PC-3 (cell line): ENCODE measurements at regions of chr3 and their contacts with region 1.

Region 1: DNA sequence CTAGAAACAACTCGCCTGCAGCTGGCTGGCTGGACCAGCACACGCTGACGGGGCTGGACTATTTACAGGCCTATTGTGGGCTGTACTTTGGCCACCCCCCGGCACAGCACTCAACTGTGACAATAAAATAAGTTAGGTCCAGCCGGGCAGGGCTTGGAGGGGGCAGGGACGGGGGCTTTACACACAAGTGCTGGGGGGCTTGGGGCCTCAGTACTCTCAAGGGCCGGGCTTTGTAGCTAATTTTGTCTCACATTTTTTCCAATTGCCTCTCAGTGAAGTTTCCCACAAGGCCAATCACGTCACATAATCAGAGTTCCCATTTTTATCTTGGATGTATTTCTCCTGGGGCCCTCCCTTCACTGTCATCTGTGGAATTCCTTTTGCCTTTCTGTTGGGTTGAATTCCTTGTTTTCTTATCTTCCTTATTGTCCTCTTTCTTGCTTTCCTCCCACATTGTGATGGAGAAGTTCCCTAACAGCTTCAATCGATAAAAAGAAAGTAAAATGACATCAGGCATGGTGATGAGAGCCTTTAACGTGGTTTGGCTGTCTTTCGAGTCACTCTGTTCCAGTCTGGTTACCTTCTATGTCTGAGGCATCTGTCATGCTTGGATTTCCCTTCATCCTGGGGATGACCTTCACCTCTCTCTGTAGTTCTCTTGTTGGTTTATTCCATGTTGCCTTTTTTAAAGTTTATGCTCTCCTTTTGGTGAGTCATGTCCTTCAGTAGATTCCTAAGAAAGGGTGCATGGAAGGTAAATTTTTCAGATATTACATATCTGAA is 44.1 kb upstream of the CMTM7 start:
- DNase-seq: no peak
- ATAC-seq: no peak
- H3K4me3 ChIP-seq: no peak overlapping the region
- H3K27ac ChIP-seq: no peak overlapping the region
- H3K4me1 ChIP-seq: no peaks in the 10 kb centered on the region
- H3K27me3 ChIP-seq: no peaks in the 10 kb centered on the region
- CTCF ChIP-seq: no peak

Region 2: DNA sequence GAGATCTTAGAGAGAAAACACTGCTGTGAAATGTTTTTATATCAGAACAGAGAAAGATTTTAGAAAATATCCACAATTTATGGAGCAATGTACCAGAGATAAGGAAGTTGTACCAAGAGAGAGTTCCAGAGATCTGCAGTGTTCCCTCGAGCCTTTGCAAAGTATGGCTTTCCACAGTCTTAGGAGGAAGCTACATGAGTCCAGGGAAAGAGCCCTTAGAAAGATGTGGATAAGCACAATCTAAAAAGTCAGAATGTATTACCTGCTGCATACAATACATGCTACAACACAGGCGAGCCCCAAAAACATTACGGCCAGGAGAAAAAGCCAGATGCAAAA is 309.6 kb before region 1 on chr3:
- CTCF ChIA-PET with region 1: no interaction called
- POLR2A ChIA-PET with region 1: interaction called, 10 read pairs
- intact Hi-C with region 1: no loop called
- DNase-seq: no peak
- ATAC-seq: peak; percentile 40
- H3K4me3 ChIP-seq: no peak overlapping the region
- H3K27ac ChIP-seq: peak overlapping the region; percentile 26
- H3K4me1 ChIP-seq: peaks cover 17% of the 10 kb centered on the region
- H3K27me3 ChIP-seq: no peaks in the 10 kb centered on the region
- CTCF ChIP-seq: no peak

Region 3: GRCh38 chr3:32276279-32276847 is 71.2 kb before region 1 on chr3:
- CTCF ChIA-PET with region 1: no interaction called
- POLR2A ChIA-PET with region 1: no interaction called
- intact Hi-C with region 1: no loop called
- DNase-seq: peak; percentile 57
- ATAC-seq: no peak
- H3K4me3 ChIP-seq: no peak overlapping the region
- H3K27ac ChIP-seq: no peak overlapping the region
- H3K4me1 ChIP-seq: peaks cover 19% of the 10 kb centered on the region
- H3K27me3 ChIP-seq: no peaks in the 10 kb centered on the region
- CTCF ChIP-seq: no peak

Region 4: DNA sequence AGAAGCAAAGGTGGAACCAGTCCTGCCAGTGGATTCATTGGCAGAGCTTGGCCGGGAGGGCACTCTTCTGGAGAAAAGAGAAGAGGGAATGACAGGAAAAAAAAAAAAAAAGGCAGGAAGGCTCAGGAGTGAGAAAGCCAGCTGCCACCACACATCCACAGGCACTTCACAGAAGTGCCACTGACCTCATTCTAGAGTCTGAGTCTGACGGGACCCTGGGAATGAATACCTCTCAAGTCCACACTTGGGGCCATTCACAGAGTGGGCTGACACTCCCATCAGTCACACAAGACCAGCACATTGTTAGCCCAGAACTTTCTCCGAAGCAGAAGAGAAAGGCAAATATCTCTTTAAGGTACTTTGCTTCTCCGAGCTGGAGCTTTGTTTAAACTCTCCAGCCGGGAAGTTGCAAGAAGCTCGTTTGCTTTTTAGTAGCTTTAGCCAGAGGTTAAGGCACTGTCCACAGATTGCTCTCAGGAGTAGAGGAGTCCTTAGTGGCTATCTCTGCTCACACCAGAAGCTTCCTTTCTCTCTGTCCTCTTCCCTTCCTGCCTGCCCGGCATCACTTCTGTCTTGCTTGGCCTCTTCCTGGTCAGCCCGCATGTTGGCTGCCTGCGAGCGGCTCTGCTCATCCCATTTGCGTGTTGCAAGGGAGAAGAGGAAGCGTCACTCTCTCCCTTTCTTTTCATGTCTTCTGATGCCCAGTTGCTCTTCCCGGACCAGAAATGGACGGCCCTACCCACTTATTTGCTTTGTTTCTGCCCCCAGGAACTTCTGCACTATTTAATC is 101.3 kb after region 1 on chr3:
- CTCF ChIA-PET with region 1: no interaction called
- POLR2A ChIA-PET with region 1: interaction called, 34 read pairs
- intact Hi-C with region 1: no loop called
- DNase-seq: no peak
- ATAC-seq: no peak
- H3K4me3 ChIP-seq: no peak overlapping the region
- H3K27ac ChIP-seq: no peak overlapping the region
- H3K4me1 ChIP-seq: 0 out of 2 replicates have a peak, but pooled peaks cover under 1% of the 10 kb centered on the region
- H3K27me3 ChIP-seq: no peaks in the 10 kb centered on the region
- CTCF ChIP-seq: no peak